ENCODE measurements at regions of chr4 and their contacts with region 1.

Region 1: GRCh38 chr4:27168559-27169182 is 308.0 kb downstream of the STIM2 start:
- DNase-seq: no peak
- H3K4me3 ChIP-seq: no peak overlapping the region
- H3K27ac ChIP-seq: no peak overlapping the region
- H3K4me1 ChIP-seq: no peaks in the 10 kb centered on the region
- H3K27me3 ChIP-seq: no peaks in the 10 kb centered on the region
- CTCF ChIP-seq: no peak
- EP300 ChIP-seq: no peak
- POLR2A ChIP-seq: no peak

Region 2: GRCh38 chr4:25953740-25954139 is 1214.9 kb before region 1 on chr4:
- in situ Hi-C with region 1: no loop called
- intact Hi-C with region 1: loop called (anchors 10 kb)
- DNase-seq: no peak
- H3K4me3 ChIP-seq: no peak overlapping the region
- H3K27ac ChIP-seq: no peak overlapping the region
- H3K4me1 ChIP-seq: peaks cover 0 to 5% (median 2%) of the 10 kb centered on the region in 4 donors
- H3K27me3 ChIP-seq: no peaks in the 10 kb centered on the region
- CTCF ChIP-seq: no peak
- EP300 ChIP-seq: no peak
- POLR2A ChIP-seq: no peak